OCI-LY7 (cell line): ENCODE measurements at regions of chr10 and their contacts with region 1.

Region 1: GRCh38 chr10:29252811-29253689 is 35.8 kb upstream of the LYZL1 start:
- DNase-seq: no peak
- H3K4me3 ChIP-seq: no peak overlapping the region
- H3K27ac ChIP-seq: no peak overlapping the region
- H3K4me1 ChIP-seq: no peaks in the 10 kb centered on the region
- CTCF ChIP-seq: no peak

Region 2: DNA sequence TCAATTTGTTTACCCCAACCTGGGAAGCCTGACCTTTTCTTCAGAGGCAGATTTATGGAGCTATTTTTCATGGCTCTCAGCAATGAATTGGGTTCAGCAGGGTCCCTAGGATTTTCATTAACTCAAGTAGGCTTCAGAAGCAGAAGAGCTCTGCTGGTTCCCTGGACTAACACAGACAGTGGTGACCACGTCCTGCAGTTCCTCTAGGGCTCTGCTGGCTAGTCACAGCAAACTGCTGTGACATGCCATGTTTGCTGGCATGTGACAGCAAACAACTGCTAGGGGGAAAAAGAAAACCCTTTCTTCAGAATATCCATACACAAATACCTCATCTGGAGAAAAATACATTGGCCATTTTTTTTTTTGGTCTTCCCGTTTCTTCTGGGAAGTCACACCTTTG is 562.5 kb before region 1 on chr10:
- CTCF ChIA-PET with region 1: no interaction called
- POLR2A ChIA-PET with region 1: interaction called, 11 read pairs
- intact Hi-C with region 1: no loop called
- DNase-seq: no peak
- H3K4me3 ChIP-seq: no peak overlapping the region
- H3K27ac ChIP-seq: no peak overlapping the region
- H3K4me1 ChIP-seq: no peaks in the 10 kb centered on the region
- CTCF ChIP-seq: no peak